Activated CD4-positive, alpha-beta T cell treated with anti-CD3 and anti-CD28 coated beads for 36 hours (primary cell): ENCODE measurements at regions of chr3 and their contacts with region 1.

Region 1: DNA sequence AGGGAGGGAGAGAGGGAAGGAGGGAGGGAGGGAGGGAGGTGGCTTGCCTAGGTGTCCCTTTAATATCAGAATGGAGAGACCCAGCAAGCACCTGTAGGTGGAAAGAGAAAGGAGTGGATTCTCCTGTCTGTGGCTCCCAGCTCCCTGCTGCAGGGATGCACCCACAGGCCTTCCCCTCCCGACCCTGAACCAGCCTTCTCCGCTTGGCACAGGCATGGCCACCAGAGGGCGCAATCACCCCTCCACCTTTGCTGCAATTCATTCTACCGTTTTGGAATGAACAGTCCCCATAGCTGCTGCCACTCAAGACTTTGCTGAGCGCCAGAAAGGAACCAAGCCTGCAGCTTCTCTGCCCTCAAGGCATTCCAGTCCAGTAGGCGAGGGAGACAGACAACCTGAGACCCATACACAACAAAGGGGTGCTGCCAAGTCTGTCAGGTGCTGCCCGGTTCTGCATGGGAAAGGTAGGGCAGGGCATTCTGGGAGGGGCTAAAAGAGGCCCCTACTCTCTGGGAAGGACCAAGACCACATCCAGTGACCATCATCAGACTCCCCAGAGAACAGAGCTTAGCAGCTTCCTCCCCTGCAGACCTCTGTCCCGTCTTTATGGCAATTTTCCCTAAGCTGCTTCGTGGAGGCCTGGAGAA is 4.9 kb downstream of the TLR9 start:
- DNase-seq: peak; percentile 95
- ATAC-seq: peak; percentile 78
- H3K4me3 Mint-ChIP-seq: no peak overlapping the region
- H3K27ac Mint-ChIP-seq: peak overlapping the region; percentile 29
- H3K4me1 Mint-ChIP-seq: peaks cover 83% of the 10 kb centered on the region
- H3K27me3 Mint-ChIP-seq: no peaks in the 10 kb centered on the region

Region 2: GRCh38 chr3:52204337-52205073 is 16.0 kb before region 1 on chr3:
- CTCF ChIA-PET with region 1: interaction called, 120 read pairs
- POLR2A ChIA-PET with region 1: interaction called, 3 read pairs
- intact Hi-C with region 1: no loop called
- DNase-seq: peak; percentile 63
- ATAC-seq: peak; percentile 75
- H3K4me3 Mint-ChIP-seq: no peak overlapping the region
- H3K27ac Mint-ChIP-seq: no peak overlapping the region
- H3K4me1 Mint-ChIP-seq: peaks cover 31% of the 10 kb centered on the region
- H3K27me3 Mint-ChIP-seq: no peaks in the 10 kb centered on the region

Region 3: GRCh38 chr3:52238761-52239701 is 18.5 kb after region 1 on chr3 and contains the start of gene TWF2:
- CTCF ChIA-PET with region 1: interaction called, 32 read pairs
- POLR2A ChIA-PET with region 1: no interaction called
- intact Hi-C with region 1: loop called in 1 of 2 experiments (anchors 2 kb)
- DNase-seq: peak; percentile 92
- ATAC-seq: peak; percentile 67
- H3K4me3 Mint-ChIP-seq: peak within 1 kb of the TSS; percentile 99
- H3K27ac Mint-ChIP-seq: peak within 1 kb of the TSS; percentile 99
- H3K4me1 Mint-ChIP-seq: peaks cover 70% of the 10 kb centered on the region
- H3K27me3 Mint-ChIP-seq: no peaks in the 10 kb centered on the region
- total RNA-seq, gene TWF2: 85.0 to 93.5 TPM

Region 4: DNA sequence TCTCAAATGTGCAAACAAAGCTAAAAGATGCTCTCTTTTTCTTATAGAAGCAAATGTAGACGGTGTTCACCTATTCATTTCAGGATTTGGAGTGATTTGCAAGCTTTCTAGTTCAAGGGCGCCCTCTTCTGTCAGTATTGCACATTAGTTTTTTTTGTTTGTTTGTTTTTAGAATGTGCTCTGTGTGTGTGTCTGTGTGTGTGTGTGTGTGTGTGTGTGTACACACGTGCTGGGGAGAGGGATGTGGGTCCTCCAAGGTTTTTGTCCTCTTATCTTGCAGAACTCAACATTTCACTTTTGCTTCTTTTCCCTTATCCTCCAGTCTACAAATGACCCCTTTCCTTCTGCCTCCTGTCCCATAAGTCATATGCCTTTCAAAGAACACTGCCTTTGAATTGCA is 119.1 kb after region 1 on chr3:
- CTCF ChIA-PET with region 1: interaction called, 191 read pairs
- POLR2A ChIA-PET with region 1: interaction called, 3 read pairs
- intact Hi-C with region 1: loop called (anchors 1 kb)
- DNase-seq: peak; percentile 59
- ATAC-seq: peak; percentile 74
- H3K4me3 Mint-ChIP-seq: no peak overlapping the region
- H3K27ac Mint-ChIP-seq: peak overlapping the region; percentile 32
- H3K4me1 Mint-ChIP-seq: peaks cover 6% of the 10 kb centered on the region
- H3K27me3 Mint-ChIP-seq: no peaks in the 10 kb centered on the region

Region 5: GRCh38 chr3:52444860-52445793 is 224.6 kb after region 1 on chr3 and contains the start of gene SEMA3G:
- CTCF ChIA-PET with region 1: interaction called, 4 read pairs
- POLR2A ChIA-PET with region 1: no interaction called
- intact Hi-C with region 1: loop called (anchors 5 to 10 kb)
- DNase-seq: peak; percentile 89
- ATAC-seq: peak; percentile 96
- H3K4me3 Mint-ChIP-seq: no peak within 1 kb of the TSS
- H3K27ac Mint-ChIP-seq: no peak within 1 kb of the TSS
- H3K4me1 Mint-ChIP-seq: no peaks in the 10 kb centered on the region
- H3K27me3 Mint-ChIP-seq: no peaks in the 10 kb centered on the region
- total RNA-seq, gene SEMA3G: not detected